Activated B cell treated with CpG ODN at 0.5 μM for 24 hours (primary cell): ENCODE measurements at regions of chr12 and their contacts with region 1.

Region 1: DNA sequence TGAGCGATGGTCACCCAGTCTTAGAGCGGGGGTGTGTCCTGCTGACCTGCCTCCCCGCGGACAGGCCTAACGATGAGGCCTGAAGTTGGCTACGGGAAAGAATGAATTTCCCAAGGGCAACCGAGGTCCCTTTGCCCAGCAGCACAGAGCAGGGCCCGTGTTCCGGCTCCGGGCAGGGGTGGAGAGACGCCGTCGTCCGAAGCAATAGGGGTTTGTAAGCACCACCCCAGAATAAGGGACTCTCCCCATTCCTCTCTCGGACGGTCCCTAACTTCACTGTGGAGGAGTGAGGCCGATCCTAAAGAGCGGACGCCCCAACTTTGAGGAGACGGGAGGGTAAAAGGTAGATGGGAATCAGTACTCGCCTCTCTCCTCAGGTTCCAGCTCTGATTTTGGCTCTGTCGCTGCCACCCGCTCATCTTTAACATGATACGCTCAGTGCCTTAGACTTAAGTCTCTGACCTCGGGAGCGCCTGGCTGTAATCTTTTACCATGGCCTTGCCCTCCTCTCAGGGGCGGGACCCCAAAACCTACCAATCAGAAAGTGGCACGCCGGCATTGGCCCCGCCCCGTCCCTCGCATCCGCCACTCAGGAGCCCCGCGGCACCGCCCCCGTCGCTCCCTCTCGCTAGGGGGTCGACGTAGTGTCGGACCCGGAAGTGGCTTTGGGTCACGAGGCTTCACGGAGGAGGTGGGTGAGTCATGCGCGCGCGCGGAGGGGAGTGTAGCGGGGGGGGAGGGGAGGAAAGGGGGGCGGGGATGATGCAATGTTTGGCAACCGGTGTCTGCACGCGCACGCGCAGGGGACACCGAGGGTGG is at the start of gene DDIT3:
- DNase-seq: peak; percentile 99
- ATAC-seq: peak; percentile 73
- H3K4me3 Mint-ChIP-seq: peak within 1 kb of the TSS; percentile 98
- H3K27ac Mint-ChIP-seq: peak within 1 kb of the TSS; percentile 99
- H3K4me1 Mint-ChIP-seq: peaks cover 59% of the 10 kb centered on the region
- H3K27me3 Mint-ChIP-seq: no peaks in the 10 kb centered on the region
- CTCF ChIP-seq: no peak
- total RNA-seq, gene DDIT3: 30.5 and 34.3 TPM in 2 replicates

Region 2: GRCh38 chr12:57088459-57089248 is 431.6 kb before region 1 on chr12 and contains the start of gene NAB2:
- CTCF ChIA-PET with region 1: no interaction called
- POLR2A ChIA-PET with region 1: no interaction called
- intact Hi-C with region 1: loop called (anchors 2 kb)
- DNase-seq: peak; percentile 89
- ATAC-seq: peak; percentile 66
- H3K4me3 Mint-ChIP-seq: peak within 1 kb of the TSS; percentile 91
- H3K27ac Mint-ChIP-seq: peak within 1 kb of the TSS; percentile 96
- H3K4me1 Mint-ChIP-seq: peaks cover 55% of the 10 kb centered on the region
- H3K27me3 Mint-ChIP-seq: no peaks in the 10 kb centered on the region
- CTCF ChIP-seq: no peak
- total RNA-seq, gene NAB2: 20.4 and 22.1 TPM in 2 replicates

Region 3: GRCh38 chr12:57462251-57462911 is 57.9 kb before region 1 on chr12:
- CTCF ChIA-PET with region 1: no interaction called
- POLR2A ChIA-PET with region 1: interaction called, 36 read pairs
- intact Hi-C with region 1: loop called (anchors 1 kb)
- DNase-seq: peak; percentile 84
- ATAC-seq: peak; percentile 72
- H3K4me3 Mint-ChIP-seq: peak overlapping the region; percentile 97
- H3K27ac Mint-ChIP-seq: peak overlapping the region; percentile 93
- H3K4me1 Mint-ChIP-seq: peaks cover 60% of the 10 kb centered on the region
- H3K27me3 Mint-ChIP-seq: no peaks in the 10 kb centered on the region
- CTCF ChIP-seq: peak; percentile 85

Region 4: DNA sequence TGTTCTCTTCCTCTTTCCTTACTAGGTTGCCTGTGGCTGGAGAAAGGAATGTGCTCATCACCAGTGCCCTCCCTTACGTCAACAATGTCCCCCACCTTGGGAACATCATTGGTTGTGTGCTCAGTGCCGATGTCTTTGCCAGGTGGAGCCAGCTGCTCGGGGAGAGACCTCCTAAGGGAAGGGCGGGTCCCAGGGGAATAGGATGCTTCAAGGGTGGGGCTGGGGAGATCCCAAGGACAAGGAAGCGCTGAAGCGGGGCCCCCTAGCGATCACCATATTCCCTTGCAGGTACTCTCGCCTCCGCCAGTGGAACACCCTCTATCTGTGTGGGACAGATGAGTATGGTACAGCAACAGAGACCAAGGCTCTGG is 22.1 kb before region 1 on chr12:
- CTCF ChIA-PET with region 1: no interaction called
- POLR2A ChIA-PET with region 1: interaction called, 18 read pairs
- intact Hi-C with region 1: no loop called
- DNase-seq: no peak
- ATAC-seq: no peak
- H3K4me3 Mint-ChIP-seq: no peak overlapping the region
- H3K27ac Mint-ChIP-seq: no peak overlapping the region
- H3K4me1 Mint-ChIP-seq: peaks cover 3% of the 10 kb centered on the region
- H3K27me3 Mint-ChIP-seq: no peaks in the 10 kb centered on the region
- CTCF ChIP-seq: no peak

Region 5: DNA sequence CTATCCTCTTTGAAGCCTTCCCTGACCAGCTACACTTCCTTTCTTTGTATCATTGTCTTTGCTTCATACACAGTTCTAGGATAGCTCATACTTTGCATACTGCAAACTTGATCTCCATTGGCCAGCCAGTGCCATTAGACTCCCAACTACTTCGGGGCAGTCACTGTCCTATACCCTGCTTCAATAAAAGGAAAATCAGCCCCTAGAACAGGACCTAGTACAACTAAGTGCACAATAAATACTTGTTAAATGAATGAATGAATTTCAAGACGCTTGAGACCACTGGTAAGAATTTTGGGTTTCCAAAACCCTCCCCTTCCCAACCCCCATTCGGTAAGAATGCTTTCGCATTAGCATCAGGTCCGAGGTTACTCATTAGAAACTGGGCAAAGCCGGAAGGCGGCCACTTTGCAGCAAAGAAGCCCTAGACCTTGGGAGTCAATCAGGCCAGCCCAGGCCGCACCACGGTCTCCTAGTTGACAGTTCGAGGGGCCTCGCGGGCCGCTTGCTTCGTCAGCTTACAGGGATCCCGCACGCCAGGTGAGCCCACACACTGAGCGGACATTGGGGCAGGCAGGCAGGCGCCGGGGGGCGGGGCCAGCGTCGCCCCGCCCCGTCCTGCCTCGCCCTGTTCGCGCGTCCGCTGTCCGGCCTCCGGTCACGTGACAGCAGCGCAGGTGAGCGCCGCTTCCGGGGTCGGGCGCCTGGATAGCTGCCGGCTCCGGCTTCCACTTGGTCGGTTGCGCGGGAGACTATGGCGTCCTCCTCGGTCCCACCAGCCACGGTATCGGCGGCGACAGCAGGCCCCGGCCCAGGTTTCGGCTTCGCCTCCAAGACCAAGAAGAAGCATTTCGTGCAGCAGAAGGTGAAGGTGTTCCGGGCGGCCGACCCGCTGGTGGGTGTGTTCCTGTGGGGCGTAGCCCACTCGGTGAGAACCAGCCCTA is 70.5 kb after region 1 on chr12 and contains the start of gene PIP4K2C:
- CTCF ChIA-PET with region 1: interaction called, 3 read pairs
- POLR2A ChIA-PET with region 1: interaction called, 3 read pairs
- intact Hi-C with region 1: loop called (anchors 1 kb)
- DNase-seq: peak; percentile 79
- ATAC-seq: peak; percentile 96
- H3K4me3 Mint-ChIP-seq: peak within 1 kb of the TSS; percentile 88
- H3K27ac Mint-ChIP-seq: peak within 1 kb of the TSS; percentile 68
- H3K4me1 Mint-ChIP-seq: peaks cover 19% of the 10 kb centered on the region
- H3K27me3 Mint-ChIP-seq: no peaks in the 10 kb centered on the region
- CTCF ChIP-seq: no peak
- total RNA-seq, gene PIP4K2C: 16.5 and 17.9 TPM in 2 replicates

Region 6: GRCh38 chr12:57744777-57745484 is 224.7 kb after region 1 on chr12 and contains the start of gene TSPAN31:
- CTCF ChIA-PET with region 1: no interaction called
- POLR2A ChIA-PET with region 1: interaction called, 4 read pairs
- intact Hi-C with region 1: loop called (anchors 2 kb)
- DNase-seq: peak; percentile 81
- ATAC-seq: peak; percentile 87
- H3K4me3 Mint-ChIP-seq: peak within 1 kb of the TSS; percentile 86
- H3K27ac Mint-ChIP-seq: peak within 1 kb of the TSS; percentile 89
- H3K4me1 Mint-ChIP-seq: peaks cover 53% of the 10 kb centered on the region
- H3K27me3 Mint-ChIP-seq: no peaks in the 10 kb centered on the region
- CTCF ChIP-seq: no peak
- total RNA-seq, gene TSPAN31: 35.8 and 37.6 TPM in 2 replicates